Thyroid gland (tissue), 4 donors: ENCODE measurements at regions of chr4 and their contacts with region 1.

Region 1: GRCh38 chr4:6087673-6088341 is 69.6 kb upstream of the C4orf50 start:
- DNase-seq: peak; percentile 82 to 91
- H3K4me3 ChIP-seq: no peak overlapping the region
- H3K27ac ChIP-seq: peak overlapping the region; percentile 18 to 36 (median 29)
- H3K4me1 ChIP-seq: peaks cover 13 to 23% of the 10 kb centered on the region in 2 donors
- H3K27me3 ChIP-seq: no peaks in the 10 kb centered on the region
- CTCF ChIP-seq: peak; percentile 39 to 97 (median 80)
- POLR2A ChIP-seq: no peak

Region 2: DNA sequence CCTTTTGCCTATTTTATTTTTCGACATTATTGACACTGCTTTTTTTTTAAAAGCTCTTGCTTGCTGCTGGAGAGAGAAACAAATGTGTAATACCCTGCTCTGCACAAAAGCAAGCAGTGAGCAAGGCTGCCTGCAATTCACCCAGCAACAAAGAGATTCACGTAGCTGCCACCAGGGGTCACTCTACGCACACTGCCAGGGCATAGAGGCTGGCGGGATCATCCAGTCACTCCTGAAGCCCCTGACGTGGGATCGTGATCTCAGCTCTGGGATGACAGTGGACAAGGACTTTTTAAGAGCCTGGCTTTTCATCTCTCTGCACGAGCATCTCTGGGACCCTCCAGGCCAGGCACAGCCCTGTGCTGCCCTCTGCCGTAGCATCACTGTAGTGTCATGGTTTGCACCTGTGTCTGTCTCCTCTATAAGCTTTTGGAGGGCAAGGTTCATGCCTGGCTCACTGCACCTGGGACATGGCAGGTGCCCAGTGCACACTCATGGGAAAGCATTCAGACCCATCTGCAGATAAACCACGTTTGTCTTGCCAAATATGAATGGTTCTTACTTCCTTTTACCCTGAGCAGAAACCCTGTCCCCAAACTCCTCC is 89.4 kb before region 1 on chr4:
- intact Hi-C with region 1: loop called (anchors 5 kb)
- DNase-seq: peak; percentile 73 to 74
- H3K4me3 ChIP-seq: no peak overlapping the region
- H3K27ac ChIP-seq: no peak overlapping the region
- H3K4me1 ChIP-seq: no peaks in the 10 kb centered on the region
- H3K27me3 ChIP-seq: no peaks in the 10 kb centered on the region
- CTCF ChIP-seq: peak; percentile 83 to 95 (median 90)
- POLR2A ChIP-seq: no peak

Region 3: DNA sequence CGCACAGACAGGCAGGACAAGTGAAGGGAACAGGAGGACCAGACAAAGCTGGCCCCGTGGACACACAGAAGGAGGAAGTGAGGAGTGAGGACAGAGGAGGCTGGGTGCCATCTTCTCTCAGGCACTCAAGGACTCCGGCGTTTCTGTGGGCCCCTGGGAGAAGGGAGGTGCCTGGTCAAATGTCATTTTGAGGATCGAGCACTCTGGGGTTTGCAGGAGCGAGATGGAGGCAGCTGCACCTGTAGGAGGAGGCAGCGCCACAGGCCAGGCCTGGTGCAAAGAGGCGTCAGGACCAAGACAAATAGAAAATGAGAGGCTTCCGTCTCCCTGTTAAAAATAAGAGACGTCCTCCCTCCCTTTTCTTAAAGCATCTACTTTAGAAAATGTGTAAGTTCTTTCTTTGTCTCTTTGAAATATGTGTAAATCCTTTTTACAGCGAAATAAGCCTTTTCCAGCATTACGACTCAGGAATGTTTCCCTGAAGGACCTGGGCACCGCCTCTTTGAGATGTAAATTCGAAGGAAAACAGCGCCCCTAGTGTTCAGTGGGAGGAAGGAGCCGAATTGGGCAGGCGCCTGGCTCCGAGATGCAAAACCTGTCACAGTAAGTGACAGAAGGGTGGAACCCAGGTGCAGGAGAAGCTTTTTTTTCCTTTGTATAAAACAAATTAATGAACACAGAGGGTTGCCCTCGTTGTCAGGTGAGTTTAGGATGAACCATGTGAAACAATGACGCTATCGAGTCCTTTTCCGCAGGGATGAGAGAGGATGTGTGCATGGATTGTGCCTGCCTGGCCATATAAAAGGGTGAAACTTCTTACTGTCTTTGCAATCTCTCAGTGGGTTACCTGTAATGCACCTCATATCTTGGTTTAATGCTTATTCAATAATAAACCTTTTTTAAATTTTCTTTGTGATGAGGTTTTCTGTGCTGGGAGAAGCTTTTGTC is 68.2 kb before region 1 on chr4:
- intact Hi-C with region 1: loop called (anchors 5 kb)
- DNase-seq: peak; percentile 69 to 74
- H3K4me3 ChIP-seq: no peak overlapping the region
- H3K27ac ChIP-seq: no peak overlapping the region
- H3K4me1 ChIP-seq: no peaks in the 10 kb centered on the region
- H3K27me3 ChIP-seq: no peaks in the 10 kb centered on the region
- CTCF ChIP-seq: peak; percentile 56 to 92 (median 82)
- POLR2A ChIP-seq: no peak

Region 4: GRCh38 chr4:6032249-6033244 is 55.3 kb before region 1 on chr4:
- intact Hi-C with region 1: loop called (anchors 5 kb)
- DNase-seq: peak; percentile 90 to 91
- H3K4me3 ChIP-seq: no peak overlapping the region
- H3K27ac ChIP-seq: peak overlapping the region; percentile 79 to 92 (median 89)
- H3K4me1 ChIP-seq: peaks cover 22 to 24% of the 10 kb centered on the region in 2 donors
- H3K27me3 ChIP-seq: no peaks in the 10 kb centered on the region
- CTCF ChIP-seq: peak in 5 of 6 experiments; percentile 21 to 99 (median 86)
- POLR2A ChIP-seq: no peak